PC-9 (cell line): ENCODE measurements at regions of chr11 and their contacts with region 1.

Region 1: DNA sequence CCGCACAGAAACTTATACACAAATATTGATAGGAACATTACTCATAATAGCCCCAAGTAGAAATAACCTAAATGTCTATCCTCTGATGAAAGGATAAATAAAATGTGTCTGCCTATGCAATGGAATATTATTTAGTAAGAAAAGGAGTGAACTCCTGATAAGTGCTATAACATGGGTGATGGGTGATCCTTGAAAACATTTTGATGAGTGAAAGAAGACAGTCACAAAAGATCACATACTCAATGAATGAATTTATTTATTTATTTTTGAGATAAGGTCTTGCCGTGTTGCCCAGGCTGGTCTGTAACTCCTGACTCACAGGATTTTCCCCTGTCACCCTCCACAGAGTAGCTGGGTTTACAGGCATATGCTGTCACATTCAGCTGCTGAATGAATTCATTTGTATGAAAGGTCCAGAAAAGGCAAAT is 17.3 kb downstream of the RNF121 start:
- DNase-seq: no peak
- H3K4me3 ChIP-seq: no peak overlapping the region
- H3K27ac ChIP-seq: peak overlapping the region; percentile 27; the same call in 1 of the 2 replicates
- H3K4me1 ChIP-seq: peaks cover 38% of the 10 kb centered on the region
- H3K27me3 ChIP-seq: no peaks in the 10 kb centered on the region
- CTCF ChIP-seq: no peak

Region 2: DNA sequence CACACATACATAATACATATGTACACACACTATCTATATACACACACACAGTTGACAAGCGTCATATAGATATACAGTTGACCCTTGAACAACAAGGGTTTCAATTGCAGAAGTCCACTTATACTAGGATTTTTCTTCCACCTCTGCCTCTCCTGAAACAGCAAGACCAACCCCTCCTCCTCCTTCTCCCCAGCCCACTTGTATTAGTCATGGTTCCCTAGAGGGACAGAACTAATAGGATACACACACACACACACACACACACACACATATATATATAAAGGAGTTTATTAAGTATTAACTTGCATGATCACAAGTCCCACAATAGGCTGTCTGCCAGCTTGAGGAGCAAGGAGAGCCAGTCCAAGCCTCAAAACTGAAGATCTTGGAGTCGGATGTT is 590.9 kb before region 1 on chr11:
- CTCF ChIA-PET with region 1: no interaction called
- POLR2A ChIA-PET with region 1: no interaction called
- intact Hi-C with region 1: no loop called
- DNase-seq: no peak
- H3K4me3 ChIP-seq: no peak overlapping the region
- H3K27ac ChIP-seq: no peak overlapping the region
- H3K4me1 ChIP-seq: no peaks in the 10 kb centered on the region
- H3K27me3 ChIP-seq: peaks cover 84% of the 10 kb centered on the region
- CTCF ChIP-seq: no peak

Region 3: DNA sequence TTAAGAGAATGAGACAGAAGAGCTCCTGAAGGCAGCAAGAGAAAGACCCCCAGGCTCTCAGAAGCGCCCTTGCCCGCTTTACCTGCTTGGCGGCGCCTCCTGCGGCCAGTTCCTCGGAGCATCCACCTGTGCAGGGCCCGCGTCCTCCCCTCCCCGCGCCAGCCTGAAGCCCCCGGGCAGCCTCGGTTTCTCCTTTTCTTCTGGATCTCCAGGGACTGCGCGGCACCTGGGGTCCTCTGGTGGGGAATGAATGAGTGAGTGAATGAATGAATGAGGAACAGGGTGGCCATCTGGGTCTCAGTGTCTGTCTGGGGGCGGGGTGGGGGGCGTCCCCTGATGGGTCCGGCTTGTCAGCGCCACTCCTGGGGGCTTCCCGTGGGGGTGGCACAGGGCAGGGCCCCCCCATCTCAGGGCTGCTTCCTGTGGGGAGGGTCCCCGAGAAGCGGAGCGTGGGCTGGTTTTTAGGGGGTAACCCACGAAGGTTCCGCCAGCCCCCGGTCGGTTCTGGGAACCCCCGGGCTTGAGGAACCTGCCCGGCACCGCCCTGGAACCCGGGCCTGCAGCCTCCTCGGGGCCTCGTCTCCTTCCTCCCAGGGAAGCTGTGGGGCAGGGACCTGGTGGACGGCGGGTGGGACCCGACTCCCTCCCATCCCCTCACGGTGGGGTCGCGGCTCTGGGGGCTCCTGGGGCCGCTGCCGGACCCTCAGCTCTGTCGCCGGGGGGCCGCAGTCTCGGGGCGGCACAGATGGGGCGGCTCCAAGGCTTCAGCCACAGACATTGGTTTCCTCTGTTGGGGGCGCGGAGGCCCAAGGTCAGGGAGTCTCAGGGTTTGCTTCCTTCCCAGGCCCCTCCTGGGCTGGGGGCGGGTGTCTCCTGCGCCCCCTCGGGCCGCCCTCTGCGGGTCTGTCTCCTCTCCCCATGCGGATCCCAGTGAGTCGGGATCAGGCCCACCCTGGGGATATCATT is 427.4 kb before region 1 on chr11:
- CTCF ChIA-PET with region 1: interaction called, 13 read pairs
- POLR2A ChIA-PET with region 1: no interaction called
- intact Hi-C with region 1: no loop called
- DNase-seq: no peak
- H3K4me3 ChIP-seq: no peak overlapping the region
- H3K27ac ChIP-seq: no peak overlapping the region
- H3K4me1 ChIP-seq: no peaks in the 10 kb centered on the region
- H3K27me3 ChIP-seq: no peaks in the 10 kb centered on the region
- CTCF ChIP-seq: no peak

Region 4: GRCh38 chr11:71928737-71929452 is 17.3 kb before region 1 on chr11 and contains the start of gene RNF121:
- CTCF ChIA-PET with region 1: interaction called, 3 read pairs
- POLR2A ChIA-PET with region 1: interaction called, 19 read pairs
- intact Hi-C with region 1: loop called (anchors 1 kb)
- DNase-seq: peak; percentile 93 to 95
- H3K4me3 ChIP-seq: peak within 1 kb of the TSS; percentile 89
- H3K27ac ChIP-seq: peak within 1 kb of the TSS; percentile 79
- H3K4me1 ChIP-seq: peaks cover 18% of the 10 kb centered on the region
- H3K27me3 ChIP-seq: no peaks in the 10 kb centered on the region
- CTCF ChIP-seq: no peak
- total RNA-seq, gene RNF121: 40.5 and 41.2 TPM in 2 replicates

Region 5: GRCh38 chr11:71962428-71963038 is 16.4 kb after region 1 on chr11:
- CTCF ChIA-PET with region 1: no interaction called
- POLR2A ChIA-PET with region 1: no interaction called
- intact Hi-C with region 1: no loop called
- DNase-seq: no peak
- H3K4me3 ChIP-seq: no peak overlapping the region
- H3K27ac ChIP-seq: peak overlapping the region; percentile 73
- H3K4me1 ChIP-seq: peaks cover 10% of the 10 kb centered on the region
- H3K27me3 ChIP-seq: no peaks in the 10 kb centered on the region
- CTCF ChIP-seq: no peak

Region 6: DNA sequence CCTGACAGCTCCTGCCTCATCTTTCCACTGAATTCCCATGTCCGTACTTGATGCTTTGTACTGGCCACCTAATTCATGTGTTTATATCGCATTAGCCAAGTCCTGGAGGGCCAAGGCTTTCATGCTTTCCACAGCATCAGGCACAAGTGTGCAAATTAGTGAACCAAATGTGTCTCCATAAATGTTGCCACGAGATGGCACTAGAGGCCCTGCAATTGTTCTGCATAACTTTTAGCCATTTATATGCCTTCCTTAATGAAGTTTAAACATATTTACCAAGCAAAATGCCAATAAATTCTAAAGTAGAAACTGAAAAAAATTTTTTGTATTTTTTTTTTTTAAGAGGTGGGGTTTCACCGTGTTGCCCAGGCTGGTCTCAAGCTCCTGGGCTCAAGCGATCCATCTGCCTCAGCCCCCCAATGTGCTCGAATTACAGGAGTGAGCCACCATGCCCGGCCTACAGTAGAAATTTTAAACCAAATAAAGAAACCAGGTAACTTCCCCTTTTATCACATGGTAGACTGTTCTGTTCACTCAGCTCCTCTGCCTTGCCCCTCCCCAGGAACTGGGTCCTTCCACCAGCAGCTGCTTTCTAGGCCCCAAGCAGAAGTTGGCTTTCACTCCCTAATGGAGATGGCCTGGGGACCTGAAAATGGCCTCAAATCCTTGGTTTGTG is 31.7 kb after region 1 on chr11:
- CTCF ChIA-PET with region 1: no interaction called
- POLR2A ChIA-PET with region 1: no interaction called
- intact Hi-C with region 1: no loop called
- DNase-seq: peak; percentile 35 to 40
- H3K4me3 ChIP-seq: no peak overlapping the region
- H3K27ac ChIP-seq: no peak overlapping the region
- H3K4me1 ChIP-seq: no peaks in the 10 kb centered on the region
- H3K27me3 ChIP-seq: no peaks in the 10 kb centered on the region
- CTCF ChIP-seq: peak; percentile 85

Region 7: DNA sequence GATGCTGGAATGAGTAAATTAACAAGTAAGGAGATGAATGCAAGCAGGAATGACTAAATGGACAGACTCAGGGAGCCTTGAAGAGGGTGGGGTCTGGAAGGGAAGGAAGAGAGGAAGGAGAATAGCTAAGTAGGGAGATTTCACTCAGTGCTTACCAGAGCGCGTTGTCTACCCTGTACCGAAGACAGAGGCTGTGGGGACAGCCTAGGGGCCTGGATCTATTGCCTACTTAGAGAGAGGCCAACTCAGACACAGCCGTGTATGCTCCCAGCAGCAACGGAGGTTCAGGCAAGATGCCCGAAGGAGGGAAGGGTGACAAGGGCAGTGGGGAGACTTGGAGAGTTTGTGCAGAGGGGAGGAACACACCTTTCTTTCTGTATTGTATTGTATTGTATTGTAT is 270.5 kb after region 1 on chr11 and contains the start of gene FOLR2:
- CTCF ChIA-PET with region 1: no interaction called
- POLR2A ChIA-PET with region 1: interaction called, 15 read pairs
- intact Hi-C with region 1: no loop called
- DNase-seq: no peak
- H3K4me3 ChIP-seq: no peak within 1 kb of the TSS
- H3K27ac ChIP-seq: no peak within 1 kb of the TSS
- H3K4me1 ChIP-seq: peaks cover under 1% of the 10 kb centered on the region; the same call in 1 of the 2 replicates
- H3K27me3 ChIP-seq: 0 out of 2 replicates have a peak, but pooled peaks cover 4% of the 10 kb centered on the region
- CTCF ChIP-seq: no peak
- total RNA-seq, gene FOLR2: not detected in 2 replicates

Region 8: GRCh38 chr11:72238040-72238450 is 291.9 kb after region 1 on chr11:
- CTCF ChIA-PET with region 1: no interaction called
- POLR2A ChIA-PET with region 1: no interaction called
- intact Hi-C with region 1: no loop called
- DNase-seq: peak in 1 of 2 experiments; percentile 46
- H3K4me3 ChIP-seq: no peak overlapping the region
- H3K27ac ChIP-seq: no peak overlapping the region
- H3K4me1 ChIP-seq: no peaks in the 10 kb centered on the region
- H3K27me3 ChIP-seq: no peaks in the 10 kb centered on the region
- CTCF ChIP-seq: peak; percentile 61